ENCODE measurements at regions of chr3 and their contacts with region 1.

Region 1: DNA sequence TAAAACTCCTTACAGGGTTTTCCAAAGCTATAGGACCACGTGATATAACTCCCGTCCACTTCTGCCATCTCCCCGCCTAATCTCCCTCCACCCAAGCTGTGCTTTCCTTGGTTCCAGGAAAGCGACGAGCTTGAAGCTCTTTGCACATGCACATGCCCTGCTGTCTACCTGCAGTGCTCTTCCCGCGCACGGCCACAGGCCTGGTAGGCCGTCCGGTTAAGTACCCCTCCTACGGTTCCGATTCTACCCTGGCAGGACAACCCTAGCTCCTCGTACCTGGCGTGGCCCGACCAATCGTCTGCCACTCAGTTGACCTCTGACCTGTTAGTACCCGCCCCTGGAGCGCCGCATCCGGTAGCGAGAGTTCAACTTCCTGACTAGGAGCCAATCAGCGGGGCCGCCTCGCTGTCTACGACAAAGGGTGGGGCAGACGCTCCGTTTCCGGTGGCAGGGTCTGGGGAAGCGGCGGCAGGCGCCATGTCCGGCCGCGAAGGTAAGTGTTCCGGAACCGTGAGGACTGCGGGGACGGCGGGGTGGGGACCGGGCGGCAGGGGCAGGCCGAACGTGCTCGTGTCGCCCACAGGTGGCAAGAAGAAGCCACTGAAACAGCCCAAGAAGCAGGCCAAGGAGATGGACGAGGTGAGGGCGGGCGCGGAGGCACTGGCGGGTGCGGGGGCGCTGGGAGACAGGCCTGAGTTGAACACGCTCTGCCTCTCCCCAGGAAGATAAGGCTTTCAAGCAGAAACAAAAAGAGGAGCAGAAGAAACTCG is at the starts of genes CCDC51 and TMA7:
- DNase-seq: peak; percentile 99
- ATAC-seq: peak; percentile 97
- H3K4me3 Mint-ChIP-seq: peak within 1 kb of the TSS; percentile 92
- H3K27ac Mint-ChIP-seq: peak within 1 kb of the TSS; percentile 98
- H3K4me1 Mint-ChIP-seq: peaks cover 29% of the 10 kb centered on the region
- H3K27me3 Mint-ChIP-seq: no peaks in the 10 kb centered on the region
- total RNA-seq, gene CCDC51: 17.5 to 25.0 TPM
- total RNA-seq, gene TMA7: 260 to 324 TPM

Region 2: DNA sequence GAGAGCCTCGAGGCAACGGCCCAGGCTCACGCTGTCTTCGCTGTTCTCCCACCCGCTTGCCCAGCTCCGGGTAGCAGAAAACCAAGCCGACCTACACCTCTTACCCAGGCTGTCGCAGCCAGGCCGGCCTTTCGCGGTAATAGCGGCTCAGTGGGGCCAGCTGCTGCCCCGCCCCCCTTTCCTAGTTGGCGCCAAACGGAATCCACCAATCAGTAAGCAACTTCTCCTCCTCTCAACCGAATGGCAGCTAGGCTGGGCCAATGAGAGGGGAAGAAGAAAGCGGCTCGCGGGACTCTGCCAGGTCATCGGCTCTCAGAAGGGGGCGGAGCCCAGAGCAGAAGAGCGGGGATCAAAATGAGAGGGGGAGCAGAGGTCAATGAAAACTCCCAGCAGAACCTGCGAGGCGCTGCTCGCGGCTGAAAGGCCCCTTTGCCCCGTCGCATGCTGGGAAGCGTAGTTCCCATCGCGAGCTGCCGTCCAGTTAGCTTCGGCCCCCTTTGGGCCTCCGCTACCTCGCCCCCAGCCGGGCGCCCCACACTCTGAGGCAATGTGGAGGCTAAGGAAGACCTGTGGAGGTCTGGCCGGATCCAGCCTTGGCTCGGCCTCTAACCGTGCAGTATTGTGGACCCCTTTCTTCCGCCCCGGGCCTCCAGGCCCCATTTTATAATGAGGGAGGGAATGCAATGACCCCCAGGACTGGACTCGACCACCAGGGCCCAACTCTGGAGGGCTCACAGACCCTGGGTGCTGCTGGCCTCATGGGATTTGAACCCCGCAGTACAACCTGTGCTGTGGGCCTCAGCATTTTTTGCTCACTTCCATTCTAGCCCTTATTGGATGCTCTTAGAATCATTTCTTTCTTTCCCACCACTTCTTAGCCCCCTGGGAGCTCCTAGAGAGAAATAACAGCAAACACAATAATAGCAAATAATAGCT is 251.5 kb before region 1 on chr3 and contains the start of gene CDC25A:
- CTCF ChIA-PET with region 1: interaction called, 25 read pairs
- POLR2A ChIA-PET with region 1: interaction called, 4 read pairs
- intact Hi-C with region 1: loop called (anchors 2 kb)
- DNase-seq: peak; percentile 98
- ATAC-seq: peak; percentile 99
- H3K4me3 Mint-ChIP-seq: peak within 1 kb of the TSS; percentile 96
- H3K27ac Mint-ChIP-seq: peak within 1 kb of the TSS; percentile 79
- H3K4me1 Mint-ChIP-seq: peaks cover 15% of the 10 kb centered on the region
- H3K27me3 Mint-ChIP-seq: peaks cover 7% of the 10 kb centered on the region
- total RNA-seq, gene CDC25A: 32.5 to 33.9 TPM

Region 3: GRCh38 chr3:48268381-48269183 is 171.4 kb before region 1 on chr3:
- CTCF ChIA-PET with region 1: interaction called, 77 read pairs
- POLR2A ChIA-PET with region 1: interaction called, 4 read pairs
- intact Hi-C with region 1: loop called (anchors 1 kb)
- DNase-seq: peak; percentile 95
- ATAC-seq: peak; percentile 91
- H3K4me3 Mint-ChIP-seq: peak overlapping the region; percentile 57
- H3K27ac Mint-ChIP-seq: peak overlapping the region; percentile 92
- H3K4me1 Mint-ChIP-seq: peaks cover 39% of the 10 kb centered on the region
- H3K27me3 Mint-ChIP-seq: no peaks in the 10 kb centered on the region

Region 4: GRCh38 chr3:48395714-48396113 is 44.3 kb before region 1 on chr3:
- CTCF ChIA-PET with region 1: interaction called, 165 read pairs
- POLR2A ChIA-PET with region 1: interaction called, 4 read pairs
- intact Hi-C with region 1: no loop called
- DNase-seq: no peak
- ATAC-seq: no peak
- H3K4me3 Mint-ChIP-seq: no peak overlapping the region
- H3K27ac Mint-ChIP-seq: no peak overlapping the region
- H3K4me1 Mint-ChIP-seq: peaks cover 3% of the 10 kb centered on the region
- H3K27me3 Mint-ChIP-seq: peaks cover 7% of the 10 kb centered on the region

Region 5: DNA sequence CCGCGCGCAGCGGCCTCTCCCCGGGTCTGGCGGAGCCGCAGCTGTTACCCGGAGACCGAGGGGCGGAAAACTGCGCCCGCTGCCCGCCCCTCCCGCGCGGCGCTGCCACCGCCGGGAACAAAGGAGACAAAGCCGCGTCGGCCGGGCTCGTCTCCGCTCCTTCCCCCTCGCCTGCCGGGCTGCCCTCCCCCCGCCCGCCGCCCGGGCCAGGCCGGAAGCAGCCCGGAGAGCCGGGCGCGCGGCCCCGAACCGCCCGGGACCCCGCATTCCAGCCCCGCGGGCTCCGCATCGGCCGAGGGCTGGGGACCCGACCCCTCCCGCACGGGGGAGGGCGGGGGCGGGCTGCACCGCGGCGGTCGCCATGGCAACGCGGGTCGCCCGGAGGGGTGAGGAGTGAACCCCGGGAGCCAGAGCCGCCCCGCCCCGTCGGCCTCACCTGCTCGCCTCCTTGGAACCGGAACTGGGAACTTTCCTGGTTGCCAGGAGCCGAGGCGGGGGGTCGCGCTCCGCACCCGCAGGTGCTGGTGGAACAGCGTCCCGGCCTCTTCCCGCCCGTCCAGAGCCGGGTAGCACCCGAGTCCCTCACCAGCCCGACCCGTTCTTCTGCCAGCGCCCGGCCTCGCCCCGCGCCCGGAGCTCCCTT is 10.6 kb before region 1 on chr3:
- CTCF ChIA-PET with region 1: interaction called, 19 read pairs
- POLR2A ChIA-PET with region 1: no interaction called
- intact Hi-C with region 1: loop called in 1 of 2 experiments (anchors 1 kb)
- DNase-seq: peak; percentile 72
- ATAC-seq: peak; percentile 75
- H3K4me3 Mint-ChIP-seq: peak overlapping the region; percentile 69
- H3K27ac Mint-ChIP-seq: no peak overlapping the region
- H3K4me1 Mint-ChIP-seq: peaks cover 7% of the 10 kb centered on the region
- H3K27me3 Mint-ChIP-seq: peaks cover 5% of the 10 kb centered on the region

Region 6: GRCh38 chr3:48507351-48508061 is 67.5 kb after region 1 on chr3:
- CTCF ChIA-PET with region 1: interaction called, 8 read pairs
- POLR2A ChIA-PET with region 1: no interaction called
- intact Hi-C with region 1: loop called in 1 of 2 experiments (anchors 10 kb)
- DNase-seq: peak; percentile 83
- ATAC-seq: peak; percentile 82
- H3K4me3 Mint-ChIP-seq: peak overlapping the region; percentile 28
- H3K27ac Mint-ChIP-seq: peak overlapping the region; percentile 80
- H3K4me1 Mint-ChIP-seq: peaks cover 45% of the 10 kb centered on the region
- H3K27me3 Mint-ChIP-seq: no peaks in the 10 kb centered on the region

Region 7: DNA sequence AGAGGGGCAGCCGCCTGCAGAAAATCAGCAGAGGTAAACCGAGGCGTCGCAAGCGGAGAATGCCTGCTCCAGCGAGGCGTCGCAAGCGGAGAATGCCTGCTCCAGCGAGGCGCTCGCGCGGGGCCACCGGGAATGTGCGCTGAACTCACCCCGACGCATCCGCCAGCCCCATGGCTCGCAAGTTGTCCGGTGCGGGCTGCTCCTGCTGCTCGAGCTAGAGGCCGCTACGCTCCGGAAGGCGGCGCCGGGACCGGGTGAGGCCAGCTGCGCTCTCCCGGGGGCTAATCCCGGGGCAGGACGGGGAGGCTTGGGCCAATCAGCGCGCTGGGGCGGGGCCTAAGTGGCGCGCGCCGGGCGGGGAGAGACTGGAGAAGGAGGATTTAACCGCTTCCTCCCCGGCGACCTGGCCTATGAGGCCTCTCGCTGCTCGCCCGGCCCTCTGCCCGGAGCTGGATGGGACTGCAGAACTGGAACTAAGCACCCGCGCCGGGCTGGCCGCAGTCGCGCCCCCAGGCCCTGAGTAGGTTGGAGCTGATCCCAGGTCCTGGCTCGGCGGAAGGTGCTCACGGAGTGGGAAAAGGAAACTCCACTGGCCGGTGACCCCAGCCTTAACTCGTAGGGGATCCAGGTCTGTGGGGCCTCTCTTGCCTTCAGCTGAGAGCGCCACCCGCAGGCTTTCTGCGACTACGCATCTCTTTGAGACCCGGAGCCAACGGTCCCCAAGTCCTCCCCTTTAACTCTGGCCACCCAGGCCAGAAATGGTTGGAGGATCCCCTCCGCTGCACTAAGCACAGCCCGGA is 195.4 kb after region 1 on chr3 and contains the start of gene SLC26A6:
- CTCF ChIA-PET with region 1: interaction called, 12 read pairs
- POLR2A ChIA-PET with region 1: interaction called, 4 read pairs
- intact Hi-C with region 1: loop called in 1 of 2 experiments (anchors 1 kb)
- DNase-seq: peak; percentile 97
- ATAC-seq: peak; percentile 97
- H3K4me3 Mint-ChIP-seq: peak within 1 kb of the TSS; percentile 84
- H3K27ac Mint-ChIP-seq: peak within 1 kb of the TSS; percentile 76
- H3K4me1 Mint-ChIP-seq: peaks cover 13% of the 10 kb centered on the region
- H3K27me3 Mint-ChIP-seq: no peaks in the 10 kb centered on the region
- total RNA-seq, gene SLC26A6: 35.0 to 38.5 TPM

Region 8: DNA sequence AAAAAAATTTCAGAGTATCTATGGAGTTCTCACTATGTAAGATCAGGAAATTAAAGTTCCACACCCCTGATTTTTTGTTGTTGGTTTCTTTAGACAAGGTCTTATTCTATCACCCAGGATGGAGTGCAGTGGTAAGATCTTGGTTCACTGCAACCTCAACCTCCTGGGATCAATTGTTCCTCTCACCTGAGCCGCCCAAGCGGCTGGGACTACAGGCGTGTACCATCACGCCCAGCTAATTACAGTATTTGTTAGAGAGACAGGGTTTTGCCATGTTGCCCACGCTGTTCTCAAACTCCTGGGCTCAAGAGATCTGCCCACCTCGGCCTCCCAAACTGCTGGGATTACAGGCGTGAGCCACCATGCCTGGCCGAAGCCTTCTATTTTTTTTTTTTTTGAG is 641.4 kb after region 1 on chr3:
- CTCF ChIA-PET with region 1: no interaction called
- POLR2A ChIA-PET with region 1: no interaction called
- intact Hi-C with region 1: no loop called
- DNase-seq: no peak
- ATAC-seq: no peak
- H3K4me3 Mint-ChIP-seq: no peak overlapping the region
- H3K27ac Mint-ChIP-seq: no peak overlapping the region
- H3K4me1 Mint-ChIP-seq: peaks cover 11% of the 10 kb centered on the region
- H3K27me3 Mint-ChIP-seq: no peaks in the 10 kb centered on the region

Measured in activated CD4-positive, alpha-beta T cell treated with anti-CD3 and anti-CD28 coated beads for 36 hours (primary cell).